A549 (cell line): ENCODE measurements at regions of chr5 and their contacts with region 1.

Region 1: GRCh38 chr5:134586866-134587524 is 45.6 kb downstream of the SAR1B start:
- DNase-seq: peak; percentile 89 to 93
- ATAC-seq: peak; percentile 94
- H3K4me3 ChIP-seq: no peak overlapping the region
- H3K27ac ChIP-seq: peak overlapping the region; percentile 62 to 73
- H3K4me1 ChIP-seq: peaks cover 12% of the 10 kb centered on the region
- CTCF ChIP-seq: peak; percentile 94
- EP300 ChIP-seq: no peak
- POLR2A ChIP-seq: no peak
- RAD21 ChIP-seq: peak; percentile 90 to 95

Region 2: DNA sequence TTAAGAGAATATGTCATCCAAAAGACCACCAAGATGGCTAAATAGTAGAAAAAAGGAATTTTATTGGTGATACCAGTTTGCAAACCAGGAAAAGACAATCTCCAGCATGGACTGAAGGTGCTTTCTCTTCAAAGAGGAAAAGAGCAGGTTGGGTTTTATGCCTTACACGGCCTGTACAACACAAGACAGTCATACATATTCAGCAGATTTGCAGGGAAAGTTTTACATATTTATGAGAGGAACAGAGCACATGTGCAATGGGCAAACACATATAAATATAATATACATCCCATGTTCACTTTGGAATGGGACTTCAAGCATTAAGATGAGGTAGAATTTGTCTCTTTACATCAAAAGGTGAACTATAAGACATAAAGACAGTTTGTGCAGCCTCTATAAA is 290.8 kb before region 1 on chr5:
- CTCF ChIA-PET with region 1: interaction called, 48 read pairs
- POLR2A ChIA-PET with region 1: no interaction called
- DNase-seq: no peak
- ATAC-seq: no peak
- H3K4me3 ChIP-seq: no peak overlapping the region
- H3K27ac ChIP-seq: no peak overlapping the region
- H3K4me1 ChIP-seq: no peaks in the 10 kb centered on the region
- CTCF ChIP-seq: no peak
- EP300 ChIP-seq: no peak
- POLR2A ChIP-seq: no peak
- RAD21 ChIP-seq: no peak

Region 3: GRCh38 chr5:134312796-134313195 is 274.2 kb before region 1 on chr5:
- CTCF ChIA-PET with region 1: interaction called, 19 read pairs
- POLR2A ChIA-PET with region 1: no interaction called
- DNase-seq: no peak
- ATAC-seq: no peak
- H3K4me3 ChIP-seq: no peak overlapping the region
- H3K27ac ChIP-seq: no peak overlapping the region
- H3K4me1 ChIP-seq: no peaks in the 10 kb centered on the region
- CTCF ChIP-seq: no peak
- EP300 ChIP-seq: no peak
- POLR2A ChIP-seq: no peak
- RAD21 ChIP-seq: no peak

Region 4: DNA sequence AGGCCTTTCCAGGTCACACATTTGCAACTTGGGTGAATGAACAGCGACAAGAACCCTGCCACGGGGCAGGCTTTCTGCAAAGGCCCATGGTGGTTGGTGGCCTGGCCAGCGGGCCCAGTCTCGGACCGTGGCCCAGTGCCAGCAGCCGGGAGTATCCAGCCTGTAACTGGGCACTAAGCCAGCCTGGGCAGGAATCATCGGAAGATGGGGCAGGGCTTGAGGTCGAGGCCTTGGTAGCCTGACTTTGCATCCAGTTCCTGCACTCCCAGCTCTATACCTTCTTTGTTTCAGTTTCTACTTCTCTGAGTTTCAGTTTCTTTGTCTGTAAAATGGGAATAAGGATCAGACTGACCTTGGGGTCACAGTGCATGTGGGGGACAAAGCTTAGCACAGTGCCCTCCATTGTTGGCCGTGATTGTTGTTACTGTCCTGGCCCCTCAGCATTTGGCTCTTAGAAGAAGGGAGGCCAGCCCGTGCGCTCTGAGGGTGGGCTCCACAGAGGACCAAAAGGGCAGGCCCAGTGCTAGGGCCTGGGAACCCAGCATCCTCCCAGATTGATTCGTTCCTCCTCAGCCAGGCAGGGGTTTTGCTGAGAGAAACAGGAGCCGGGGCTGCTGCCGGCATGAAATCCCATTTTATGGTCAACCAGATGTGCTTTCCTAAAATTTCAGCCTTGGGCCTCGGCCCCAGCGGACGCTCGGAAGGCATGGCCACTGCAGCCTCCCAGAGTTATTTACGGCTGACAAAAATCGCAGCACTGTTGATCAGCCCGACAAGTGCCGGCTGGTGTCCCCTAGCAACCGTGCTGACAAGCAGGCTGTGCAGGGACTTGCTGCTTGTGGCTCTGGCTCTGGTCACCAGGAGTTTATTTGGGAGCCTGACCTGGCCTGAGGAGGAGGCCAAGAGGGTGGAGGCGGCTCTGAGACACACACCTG is 18.0 kb before region 1 on chr5:
- CTCF ChIA-PET with region 1: interaction called, 10 read pairs
- POLR2A ChIA-PET with region 1: no interaction called
- DNase-seq: peak in 1 of 2 experiments; percentile 50
- ATAC-seq: peak in 1 of 2 experiments; percentile 40; a peak in 4 of 6 replicates
- H3K4me3 ChIP-seq: no peak overlapping the region
- H3K27ac ChIP-seq: peak overlapping the region; percentile 55 to 78; a peak in 5 of 6 replicates
- H3K4me1 ChIP-seq: peaks cover 30% of the 10 kb centered on the region
- CTCF ChIP-seq: no peak
- EP300 ChIP-seq: no peak
- POLR2A ChIP-seq: no peak
- RAD21 ChIP-seq: no peak

Region 5: DNA sequence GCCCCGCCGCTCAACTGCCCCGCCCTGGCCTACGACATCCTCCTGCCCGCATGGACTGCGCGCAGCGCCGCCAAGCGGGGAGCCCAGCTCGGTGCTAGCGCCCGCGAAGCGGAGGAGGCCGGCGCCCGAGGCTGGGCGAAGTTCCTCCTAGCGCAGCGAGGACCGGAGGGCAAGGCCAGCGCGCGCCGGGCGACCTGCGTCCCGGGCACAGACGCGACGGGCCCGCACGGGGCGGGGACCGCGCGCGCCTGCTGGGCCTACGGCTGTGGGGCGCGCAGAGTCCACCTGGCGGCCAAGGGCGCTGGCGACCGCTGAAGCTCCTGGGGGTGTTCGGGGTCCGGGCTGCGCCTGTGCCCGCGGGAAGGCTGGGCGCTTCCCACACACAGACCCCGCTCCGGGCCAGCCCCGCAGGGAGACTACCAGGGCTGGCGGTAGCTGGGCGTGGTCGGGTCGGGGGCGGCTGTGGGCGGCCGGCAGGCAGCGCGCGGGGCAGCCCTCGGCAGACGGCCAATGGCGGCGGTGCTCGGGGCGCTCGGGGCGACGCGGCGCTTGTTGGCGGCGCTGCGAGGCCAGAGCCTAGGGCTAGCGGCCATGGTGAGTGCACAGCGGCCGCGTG is 317.7 kb after region 1 on chr5 and contains the start of gene PCBD2:
- CTCF ChIA-PET with region 1: interaction called, 3 read pairs
- POLR2A ChIA-PET with region 1: interaction called, 10 read pairs
- DNase-seq: peak; percentile 83 to 94
- ATAC-seq: peak; percentile 89 to 92
- H3K4me3 ChIP-seq: peak within 1 kb of the TSS; percentile 74
- H3K27ac ChIP-seq: peak within 1 kb of the TSS; percentile 94 to 98
- H3K4me1 ChIP-seq: peaks cover 7% of the 10 kb centered on the region; the same call in 1 of the 3 replicates
- CTCF ChIP-seq: peak; percentile 96
- EP300 ChIP-seq: no peak
- POLR2A ChIP-seq: peak; percentile 65
- RAD21 ChIP-seq: peak; percentile 57 to 78
- polyA plus RNA-seq, gene PCBD2: 13.3 and 13.6 TPM in 2 replicates